Activated CD4-positive, alpha-beta T cell treated with anti-CD3 and anti-CD28 coated beads, Interleukin-2, amount 10 ng/mL, durations not matched to agents 24 days and 14 days (primary cell): ENCODE measurements at regions of chr9 and their contacts with region 1.

Region 1: DNA sequence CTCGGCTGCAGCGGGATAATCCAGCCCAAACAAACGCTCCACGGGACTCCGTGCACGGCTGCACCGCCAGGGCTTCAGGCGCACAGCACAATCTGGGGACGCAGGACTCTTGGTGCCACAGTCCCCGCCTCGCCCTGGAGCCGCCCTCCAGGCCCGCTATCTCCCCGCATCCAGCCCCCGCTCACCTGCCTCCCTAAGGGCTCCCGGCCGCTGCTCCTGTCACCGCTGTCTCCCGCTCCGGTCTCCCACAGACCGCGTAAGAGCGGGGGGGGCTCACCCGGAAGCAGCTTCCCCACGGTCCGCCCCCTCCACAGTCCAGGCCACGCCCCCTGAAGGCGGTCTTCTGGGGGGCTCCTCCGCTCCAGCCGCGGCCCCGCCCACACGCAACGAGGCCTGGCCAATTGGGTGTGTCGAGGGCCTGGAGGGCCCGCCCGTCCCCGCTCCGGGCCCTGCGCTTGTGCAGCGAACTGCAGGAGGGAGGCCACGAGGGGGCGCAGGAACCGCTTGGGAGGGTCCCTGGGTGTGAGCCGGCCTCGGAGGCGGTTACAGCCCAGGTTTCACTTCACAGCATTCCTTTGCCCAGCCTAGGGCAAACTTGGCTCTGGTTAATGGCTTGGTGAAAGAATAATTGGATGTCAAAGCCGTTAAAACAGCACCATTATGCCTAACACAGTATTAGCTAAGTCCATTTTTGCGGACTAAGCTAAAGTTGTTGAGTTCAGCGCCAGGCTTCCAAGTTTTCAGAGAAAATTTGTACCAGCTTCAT is at the start of gene ALAD:
- DNase-seq: peak; percentile 100
- H3K4me3 Mint-ChIP-seq: peak within 1 kb of the TSS; percentile 96
- H3K27ac Mint-ChIP-seq: peak within 1 kb of the TSS; percentile 90
- H3K4me1 Mint-ChIP-seq: peaks cover 23% of the 10 kb centered on the region
- H3K27me3 Mint-ChIP-seq: no peaks in the 10 kb centered on the region
- total RNA-seq, gene ALAD: 23.5 and 24.9 TPM in 2 replicates

Region 2: DNA sequence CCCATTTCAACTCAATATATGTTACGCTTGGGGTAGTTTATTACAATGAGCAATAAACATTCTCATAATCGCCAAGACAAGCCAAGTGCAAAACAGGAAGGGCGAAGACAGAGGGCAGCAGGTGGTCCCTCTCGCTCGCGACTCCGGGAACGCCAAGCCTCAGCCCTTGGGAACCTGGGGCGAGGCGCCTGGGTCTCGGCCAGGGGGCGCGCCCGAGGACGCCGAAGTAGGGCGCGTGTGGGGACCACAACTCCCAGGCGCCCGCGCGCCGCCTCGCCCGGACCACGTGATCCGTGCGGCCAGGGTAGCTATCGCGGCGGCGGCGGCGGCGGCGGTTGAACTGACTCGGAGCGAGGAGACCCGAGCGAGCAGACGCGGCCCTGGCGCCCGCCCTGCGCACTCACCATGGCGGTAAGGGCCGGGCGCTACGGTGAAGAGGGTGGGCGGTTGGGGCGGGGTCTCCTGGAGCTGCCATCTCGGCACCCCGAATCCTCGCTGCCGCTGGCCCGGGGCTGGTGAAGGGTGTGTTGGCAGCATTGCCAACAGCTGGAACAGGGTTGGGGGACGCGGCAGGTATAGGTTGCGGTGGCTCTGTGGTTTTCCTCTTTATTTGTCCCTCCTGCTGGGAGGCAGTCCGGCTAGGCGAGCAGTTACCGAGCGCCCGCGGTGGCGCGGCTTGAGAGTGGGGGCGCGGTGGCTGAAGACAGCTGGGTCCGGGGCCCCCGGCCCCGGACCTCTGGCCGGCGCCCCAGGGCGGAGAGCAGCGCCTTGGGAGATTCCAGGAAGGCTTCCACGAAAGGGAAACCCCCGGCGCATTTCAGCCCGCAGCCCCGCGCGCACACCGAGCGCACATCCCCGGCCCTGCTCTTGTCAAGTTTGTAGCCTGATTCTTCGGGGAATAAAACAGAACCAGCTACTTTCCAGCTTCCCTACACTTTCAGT is 250.3 kb before region 1 on chr9 and contains the start of gene SLC31A2:
- intact Hi-C with region 1: loop called (anchors 1 kb)
- DNase-seq: peak; percentile 97
- H3K4me3 Mint-ChIP-seq: peak within 1 kb of the TSS; percentile 84
- H3K27ac Mint-ChIP-seq: peak within 1 kb of the TSS; percentile 80
- H3K4me1 Mint-ChIP-seq: peaks cover 28% of the 10 kb centered on the region
- H3K27me3 Mint-ChIP-seq: peaks cover 2% of the 10 kb centered on the region
- total RNA-seq, gene SLC31A2: 4.5 and 5.3 TPM in 2 replicates

Region 3: GRCh38 chr9:113340017-113340699 is 61.1 kb before region 1 on chr9 and contains the start of gene WDR31:
- intact Hi-C with region 1: loop called (anchors 2 kb)
- DNase-seq: peak; percentile 95
- H3K4me3 Mint-ChIP-seq: peak within 1 kb of the TSS; percentile 81
- H3K27ac Mint-ChIP-seq: peak within 1 kb of the TSS; percentile 78
- H3K4me1 Mint-ChIP-seq: peaks cover 43% of the 10 kb centered on the region
- H3K27me3 Mint-ChIP-seq: no peaks in the 10 kb centered on the region
- total RNA-seq, gene WDR31: 2.2 and 2.7 TPM in 2 replicates

Region 4: DNA sequence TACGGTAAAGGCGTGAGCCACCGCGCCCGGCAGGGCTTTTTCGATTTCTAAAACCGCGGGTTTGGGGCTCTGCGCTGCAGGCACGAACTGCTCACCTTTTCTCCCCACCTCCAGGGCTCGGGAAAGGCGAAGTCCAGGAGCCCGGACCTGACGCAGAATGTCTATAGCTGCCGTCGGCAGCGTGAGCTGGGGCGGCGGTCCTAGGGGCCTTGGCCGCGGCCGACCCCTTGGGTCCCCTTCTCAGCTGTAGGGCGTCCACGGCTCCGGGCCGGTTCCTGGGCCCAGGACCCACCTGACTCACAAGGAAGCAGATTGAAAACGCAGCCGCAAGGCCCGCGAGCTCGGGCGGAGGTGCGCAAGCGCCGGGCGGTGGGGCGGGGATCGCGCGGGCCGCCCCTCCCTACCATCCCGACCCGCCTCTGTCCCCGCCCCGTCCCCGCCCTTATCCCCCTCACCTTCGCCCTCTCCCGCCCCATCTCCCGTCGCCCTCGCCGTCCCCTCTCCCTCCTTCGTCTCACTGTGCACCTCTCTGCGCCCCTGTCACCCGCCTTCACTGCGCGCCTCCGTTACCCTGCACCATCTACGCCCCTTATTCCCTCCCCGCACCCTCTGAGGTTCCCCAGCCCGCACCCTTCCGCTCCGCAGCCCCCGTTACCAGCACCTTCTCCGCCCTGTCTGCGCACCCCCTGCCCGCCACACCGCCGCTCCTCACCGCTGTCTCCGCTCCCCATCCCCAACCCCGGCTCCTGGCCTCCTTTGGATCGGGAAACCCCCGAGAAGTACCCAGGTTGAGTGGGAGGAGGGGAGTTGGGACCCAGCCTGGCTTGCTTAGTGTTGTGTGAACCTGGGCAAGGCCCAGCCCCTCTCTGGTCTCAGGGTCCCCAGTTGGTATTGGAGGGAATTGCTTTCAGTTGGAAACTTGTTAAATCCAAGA is 24.3 kb before region 1 on chr9 and contains the start of gene HDHD3:
- intact Hi-C with region 1: loop called (anchors 2 kb)
- DNase-seq: peak; percentile 95
- H3K4me3 Mint-ChIP-seq: peak within 1 kb of the TSS; percentile 92
- H3K27ac Mint-ChIP-seq: peak within 1 kb of the TSS; percentile 83
- H3K4me1 Mint-ChIP-seq: peaks cover 15% of the 10 kb centered on the region
- H3K27me3 Mint-ChIP-seq: no peaks in the 10 kb centered on the region
- total RNA-seq, gene HDHD3: 16.5 and 17.8 TPM in 2 replicates

Region 5: DNA sequence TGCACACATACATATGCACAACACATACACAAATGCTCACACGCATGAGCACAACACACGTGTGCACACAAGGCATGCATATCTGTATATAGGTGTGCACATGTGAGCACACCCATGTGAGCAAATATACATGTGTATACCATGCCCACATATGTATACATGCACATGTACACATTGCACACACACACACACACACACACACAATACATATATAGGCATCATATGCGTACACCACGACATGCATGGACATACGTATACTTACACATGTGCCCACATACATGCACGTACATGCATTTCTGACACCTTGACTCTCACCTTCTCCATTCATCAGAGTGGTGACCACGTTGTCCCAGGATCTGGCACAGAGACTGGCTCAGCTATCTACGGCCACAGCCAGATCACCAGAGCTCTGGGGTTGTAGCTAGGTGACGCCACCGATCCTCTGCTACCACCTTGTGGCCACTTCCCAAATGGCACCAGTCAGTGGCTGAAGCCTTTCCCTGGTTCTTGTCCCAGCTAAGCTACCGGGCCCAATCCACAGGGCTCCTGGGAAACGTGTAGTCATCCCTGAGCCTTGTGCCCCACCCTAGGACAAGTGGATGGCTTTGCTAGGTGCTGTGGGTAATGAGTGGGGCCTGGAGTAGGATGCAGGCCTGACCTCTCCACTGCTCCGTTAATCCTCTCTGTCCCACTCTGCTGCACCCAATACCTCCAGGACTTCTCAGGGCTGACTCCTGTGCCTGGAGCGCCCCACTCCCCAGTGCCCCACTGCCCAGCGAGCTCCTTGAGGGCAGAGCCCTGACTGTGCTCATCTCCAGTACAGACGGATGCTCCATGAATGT is 256.7 kb after region 1 on chr9:
- intact Hi-C with region 1: loop called (anchors 1 kb)
- DNase-seq: peak; percentile 94
- H3K4me3 Mint-ChIP-seq: no peak overlapping the region
- H3K27ac Mint-ChIP-seq: no peak overlapping the region
- H3K4me1 Mint-ChIP-seq: peaks cover 9% of the 10 kb centered on the region
- H3K27me3 Mint-ChIP-seq: peaks cover 22% of the 10 kb centered on the region